Caco-2 (cell line): ENCODE measurements at regions of chr17 and their contacts with region 1.

Region 1: DNA sequence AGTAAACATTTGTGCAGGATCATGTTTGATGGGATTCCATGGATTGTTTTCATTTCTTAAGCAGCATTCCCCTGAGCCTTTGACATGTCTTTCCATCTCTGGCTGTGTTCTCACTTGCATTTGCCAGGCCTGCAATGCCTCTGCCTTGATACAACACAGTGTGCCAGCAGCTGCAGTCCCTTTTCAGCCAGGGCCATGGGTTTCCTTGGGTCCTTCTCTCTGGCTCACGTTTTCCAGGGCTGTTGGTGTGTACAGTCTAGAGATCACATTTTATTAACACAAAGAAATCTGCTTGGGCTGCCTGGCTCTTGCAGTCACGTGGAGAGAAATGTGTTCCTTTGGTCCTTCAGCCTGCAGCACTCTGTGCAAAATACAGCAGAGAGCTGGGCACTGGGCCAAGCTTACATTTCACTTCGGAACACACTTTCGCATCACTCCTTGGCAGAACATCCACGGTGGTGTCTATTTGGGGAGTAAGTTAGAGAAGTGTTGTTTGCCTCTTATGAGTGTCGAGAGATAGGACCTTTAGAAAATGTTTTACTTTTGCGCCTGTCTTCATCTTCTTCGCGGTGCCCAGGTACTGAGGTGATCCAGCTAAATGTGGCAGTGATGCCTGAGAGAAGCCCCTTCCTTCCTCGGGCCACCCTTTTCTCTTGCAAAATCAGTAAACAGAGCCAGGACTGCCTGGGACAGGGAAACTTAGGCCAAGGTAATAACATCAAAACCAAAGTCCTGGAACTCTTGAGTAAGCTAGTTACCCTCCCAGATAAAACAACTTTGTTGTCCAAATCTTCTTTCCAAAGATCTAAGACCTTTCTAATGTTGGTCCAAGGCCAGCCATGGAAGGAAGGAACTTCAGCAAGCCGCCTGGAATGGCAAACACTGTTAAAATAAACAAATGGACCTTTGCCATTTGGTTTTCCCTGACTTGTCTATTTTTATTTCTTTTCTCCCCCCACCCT is 20.9 kb downstream of the HLF start:
- DNase-seq: peak; percentile 75 to 79
- H3K4me3 ChIP-seq: no peak overlapping the region
- H3K4me3 Mint-ChIP-seq: peak overlapping the region; percentile 56
- H3K27ac Mint-ChIP-seq: peak overlapping the region; percentile 86
- H3K4me1 ChIP-seq: peaks cover 57% of the 10 kb centered on the region
- H3K4me1 Mint-ChIP-seq: peaks cover 46% of the 10 kb centered on the region
- H3K27me3 ChIP-seq: no peaks in the 10 kb centered on the region
- H3K27me3 Mint-ChIP-seq: no peaks in the 10 kb centered on the region
- CTCF ChIP-seq: no peak

Region 2: DNA sequence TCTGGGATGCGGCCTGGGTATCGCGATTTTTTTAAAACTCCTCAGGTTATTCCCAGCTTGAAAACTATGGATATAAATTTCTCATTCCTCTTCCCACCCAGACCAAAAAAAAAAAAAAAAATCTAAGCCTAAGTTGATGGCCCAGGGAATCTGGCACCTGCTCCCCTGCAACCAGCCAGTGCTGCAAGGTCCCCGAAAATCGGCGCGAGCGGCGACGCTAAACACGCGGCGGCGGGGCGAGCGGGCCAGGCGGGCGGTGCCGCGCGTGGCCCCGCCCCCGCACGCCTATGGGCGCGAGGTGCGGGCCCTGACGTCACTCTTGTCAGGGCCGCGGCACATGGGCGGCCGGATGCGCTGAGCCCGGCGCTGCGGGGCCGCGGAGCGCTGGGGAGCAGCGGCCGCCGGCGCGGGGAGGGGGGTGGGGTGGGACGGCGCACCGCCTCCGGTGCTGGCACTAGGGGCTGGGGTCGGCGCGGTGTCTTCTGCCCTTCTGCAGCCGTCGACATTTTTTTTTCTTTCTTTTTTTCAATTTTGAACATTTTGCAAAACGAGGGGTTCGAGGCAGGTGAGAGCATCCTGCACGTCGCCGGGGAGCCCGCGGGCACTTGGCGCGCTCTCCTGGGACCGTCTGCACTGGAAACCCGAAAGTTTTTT is 20.8 kb before region 1 on chr17 and contains the start of gene HLF:
- CTCF ChIA-PET with region 1: interaction called, 8 read pairs
- POLR2A ChIA-PET with region 1: interaction called, 14 read pairs
- intact Hi-C with region 1: loop called (anchors 1 kb)
- DNase-seq: peak; percentile 83 to 91
- H3K4me3 ChIP-seq: peak within 1 kb of the TSS; percentile 66
- H3K4me3 Mint-ChIP-seq: peak within 1 kb of the TSS; percentile 84
- H3K27ac Mint-ChIP-seq: peak within 1 kb of the TSS; percentile 39
- H3K4me1 ChIP-seq: no peaks in the 10 kb centered on the region
- H3K4me1 Mint-ChIP-seq: peaks cover 14% of the 10 kb centered on the region
- H3K27me3 ChIP-seq: no peaks in the 10 kb centered on the region
- H3K27me3 Mint-ChIP-seq: no peaks in the 10 kb centered on the region
- CTCF ChIP-seq: no peak
- total RNA-seq, gene HLF: 17.3 and 19.8 TPM in 2 replicates

Region 3: DNA sequence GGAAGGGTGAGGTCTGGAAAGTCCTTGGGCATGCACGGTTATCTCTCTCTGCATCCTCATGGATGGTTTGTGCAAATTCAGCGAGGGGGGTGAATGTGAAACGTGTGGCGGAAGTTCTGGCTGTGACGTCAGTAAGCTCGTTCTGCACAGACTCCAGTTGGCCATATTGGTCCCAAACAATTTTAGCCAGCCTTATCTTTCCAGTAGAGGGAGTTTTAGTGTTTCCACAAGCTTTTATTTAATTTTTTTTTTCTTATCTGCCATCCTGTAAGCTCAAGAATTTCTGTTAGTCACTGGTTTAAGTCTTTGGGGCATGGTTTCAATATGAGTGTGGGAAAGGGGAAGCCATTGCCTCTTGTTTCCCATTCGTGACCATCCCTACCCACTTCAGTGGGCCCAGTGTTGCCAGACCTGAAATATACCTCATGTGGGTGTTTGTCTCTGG is 18.1 kb after region 1 on chr17:
- CTCF ChIA-PET with region 1: no interaction called
- POLR2A ChIA-PET with region 1: no interaction called
- intact Hi-C with region 1: no loop called
- DNase-seq: no peak
- H3K4me3 ChIP-seq: no peak overlapping the region
- H3K4me3 Mint-ChIP-seq: no peak overlapping the region
- H3K27ac Mint-ChIP-seq: no peak overlapping the region
- H3K4me1 ChIP-seq: peaks cover 8% of the 10 kb centered on the region; the same call in 1 of the 2 replicates
- H3K4me1 Mint-ChIP-seq: peaks cover 16% of the 10 kb centered on the region
- H3K27me3 ChIP-seq: no peaks in the 10 kb centered on the region
- H3K27me3 Mint-ChIP-seq: no peaks in the 10 kb centered on the region
- CTCF ChIP-seq: no peak

Region 4: GRCh38 chr17:55330336-55330981 is 44.8 kb after region 1 on chr17:
- CTCF ChIA-PET with region 1: no interaction called
- POLR2A ChIA-PET with region 1: interaction called, 3 read pairs
- intact Hi-C with region 1: loop called (anchors 2 kb)
- DNase-seq: peak; percentile 65 to 77
- H3K4me3 ChIP-seq: no peak overlapping the region
- H3K4me3 Mint-ChIP-seq: peak overlapping the region; percentile 12
- H3K27ac Mint-ChIP-seq: peak overlapping the region; percentile 72
- H3K4me1 ChIP-seq: peaks cover 48% of the 10 kb centered on the region
- H3K4me1 Mint-ChIP-seq: peaks cover 31% of the 10 kb centered on the region
- H3K27me3 ChIP-seq: no peaks in the 10 kb centered on the region
- H3K27me3 Mint-ChIP-seq: no peaks in the 10 kb centered on the region
- CTCF ChIP-seq: no peak